ENCODE measurements at regions of chr3 and their contacts with region 1.

Region 1: GRCh38 chr3:114152519-114153151 is 26.2 kb downstream of the DRD3 start:
- DNase-seq: peak; percentile 78 to 91 (median 82)
- ATAC-seq: peak; percentile 83 to 94 (median 92)
- H3K4me3 ChIP-seq: peak overlapping the region in 11 of 12 donors; percentile 9 to 61 (median 52)
- H3K27ac ChIP-seq: peak overlapping the region in 1 of 12 donors; percentile 11
- H3K4me1 ChIP-seq: peaks cover 0 to 11% (median 4%) of the 10 kb centered on the region in 12 donors
- H3K27me3 ChIP-seq: no peaks in the 10 kb centered on the region
- CTCF ChIP-seq: peak; percentile 81 to 99 (median 92)
- POLR2A ChIP-seq: no peak

Region 2: GRCh38 chr3:113745273-113746068 is 407.2 kb before region 1 on chr3:
- intact Hi-C with region 1: loop called in 1 of 10 experiments (anchors 10 kb)
- DNase-seq: peak; percentile 57 to 77 (median 71)
- ATAC-seq: peak; percentile 52 to 73 (median 70)
- H3K4me3 ChIP-seq: peak overlapping the region; percentile 63 to 95 (median 85)
- H3K27ac ChIP-seq: peak overlapping the region; percentile 94 to 100 (median 98)
- H3K4me1 ChIP-seq: peaks cover 6 to 71% (median 36%) of the 10 kb centered on the region in 12 donors
- H3K27me3 ChIP-seq: no peaks in the 10 kb centered on the region
- CTCF ChIP-seq: peak; percentile 23 to 68 (median 59)
- POLR2A ChIP-seq: no peak

Region 3: DNA sequence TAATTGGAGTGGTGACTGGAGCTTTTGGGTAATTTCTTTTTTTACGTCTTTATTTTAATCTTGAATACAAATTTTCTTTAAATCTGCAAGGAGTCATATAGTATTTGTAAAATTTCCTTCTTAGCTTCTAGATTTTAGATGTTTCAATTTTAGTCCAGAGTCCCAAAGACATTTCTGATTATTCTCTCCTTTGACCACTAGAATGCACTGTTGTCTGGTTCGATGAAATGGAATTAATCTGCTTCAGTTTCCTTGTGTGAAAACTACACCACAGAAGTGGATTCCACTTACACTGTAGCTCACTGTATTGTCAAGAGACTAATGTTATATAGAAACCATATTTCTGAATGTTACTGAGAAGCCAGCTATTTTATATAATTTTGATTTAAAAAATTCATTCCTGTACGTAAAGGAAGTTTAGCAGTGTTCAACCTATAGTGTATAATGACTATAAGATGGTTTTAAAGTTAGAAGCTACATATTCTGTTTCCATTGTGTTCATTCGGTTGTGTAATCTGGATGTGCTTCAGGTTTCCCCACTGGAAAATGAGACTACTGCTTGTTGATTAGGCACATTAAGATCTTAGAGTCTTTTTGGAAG is 307.9 kb before region 1 on chr3:
- intact Hi-C with region 1: loop called in 3 of 10 experiments (anchors 5 to 10 kb)
- DNase-seq: no peak
- ATAC-seq: no peak
- H3K4me3 ChIP-seq: no peak overlapping the region
- H3K27ac ChIP-seq: no peak overlapping the region
- H3K4me1 ChIP-seq: no peaks in the 10 kb centered on the region
- H3K27me3 ChIP-seq: no peaks in the 10 kb centered on the region
- CTCF ChIP-seq: peak; percentile 32 to 70 (median 48)
- POLR2A ChIP-seq: no peak

Region 4: DNA sequence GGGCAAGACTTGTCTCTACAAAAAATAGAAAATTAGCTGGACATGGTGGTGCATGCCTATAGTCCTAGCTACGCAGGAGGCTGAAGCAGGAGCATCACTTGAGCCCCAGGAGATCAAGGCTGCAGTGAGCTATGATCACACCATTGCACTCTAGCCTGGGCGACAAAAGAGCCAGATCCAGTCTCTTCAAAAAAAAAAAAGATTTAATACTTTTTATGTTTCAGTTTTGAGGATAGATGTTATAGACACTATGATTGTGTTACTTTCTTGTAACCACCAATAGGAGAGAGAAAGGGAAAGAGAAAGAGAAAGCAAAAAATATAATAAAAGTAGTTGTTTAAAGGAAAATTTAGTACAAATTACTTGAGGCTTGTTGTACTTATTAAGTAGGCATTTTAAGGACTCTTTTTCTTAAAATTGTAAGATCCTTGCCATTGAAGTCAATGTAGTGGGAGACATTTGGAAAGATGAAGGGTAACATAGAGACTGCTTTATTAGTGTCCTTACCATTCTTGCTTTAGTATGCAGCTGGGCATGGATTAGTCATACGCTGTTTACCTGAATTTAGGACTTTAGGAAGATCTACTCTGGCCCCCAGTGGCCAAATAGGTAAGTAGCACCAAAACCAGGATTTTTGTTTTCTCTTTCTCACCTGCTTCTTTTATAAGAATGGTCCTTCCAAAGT is 239.9 kb before region 1 on chr3:
- intact Hi-C with region 1: no loop called
- DNase-seq: no peak
- ATAC-seq: peak in 1 of 4 donors; percentile 57
- H3K4me3 ChIP-seq: no peak overlapping the region
- H3K27ac ChIP-seq: no peak overlapping the region
- H3K4me1 ChIP-seq: peaks cover 0 to 9% (median 0%) of the 10 kb centered on the region in 12 donors
- H3K27me3 ChIP-seq: no peaks in the 10 kb centered on the region
- CTCF ChIP-seq: peak in 10 of 12 donors; percentile 12 to 52 (median 42)
- POLR2A ChIP-seq: no peak

Region 5: DNA sequence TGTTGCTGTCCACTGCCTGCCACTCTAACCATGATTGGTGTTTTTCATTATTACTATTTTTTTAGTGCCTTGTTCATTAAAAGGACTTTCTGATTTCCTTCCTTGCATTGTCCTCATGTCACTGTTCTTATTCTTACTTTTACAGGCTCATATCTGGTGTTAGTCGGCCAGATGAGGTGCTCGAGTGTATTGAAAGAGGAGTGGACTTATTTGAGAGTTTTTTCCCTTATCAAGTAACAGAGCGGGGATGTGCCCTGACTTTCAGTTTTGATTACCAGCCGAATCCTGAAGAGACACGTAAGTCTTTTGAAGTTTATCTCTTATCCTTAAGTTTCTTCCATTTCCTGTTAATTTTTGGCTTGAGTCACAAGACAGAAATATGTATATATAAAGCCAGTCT is 72.9 kb before region 1 on chr3:
- intact Hi-C with region 1: loop called in 2 of 10 experiments (anchors 2 to 10 kb)
- DNase-seq: no peak
- ATAC-seq: peak in 1 of 4 donors; percentile 37
- H3K4me3 ChIP-seq: peak overlapping the region in 6 of 12 donors; percentile 0 to 38 (median 16)
- H3K27ac ChIP-seq: peak overlapping the region in 8 of 12 donors; percentile 1 to 58 (median 20)
- H3K4me1 ChIP-seq: peaks cover 0 to 7% (median 0%) of the 10 kb centered on the region in 12 donors
- H3K27me3 ChIP-seq: no peaks in the 10 kb centered on the region
- CTCF ChIP-seq: no peak
- POLR2A ChIP-seq: no peak

Region 6: DNA sequence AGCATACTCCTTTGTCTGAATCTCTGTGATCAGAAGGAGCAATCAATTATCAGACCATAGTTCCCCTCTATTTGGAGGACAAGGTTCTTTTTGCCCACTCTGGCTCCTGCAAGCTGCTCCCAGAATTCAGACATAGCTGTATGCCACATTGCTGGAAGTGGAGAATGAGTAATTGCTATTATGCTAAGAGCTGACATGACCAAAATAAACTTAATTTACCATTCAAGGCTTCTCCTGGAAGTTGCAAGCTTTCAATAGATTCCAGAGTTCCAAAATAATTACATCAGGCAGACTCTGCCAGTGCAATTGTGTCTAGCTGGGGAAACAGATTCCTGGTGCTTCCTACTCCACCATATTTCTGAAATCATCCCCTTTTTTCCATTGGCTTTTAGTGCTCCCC is 33.9 kb after region 1 on chr3:
- intact Hi-C with region 1: no loop called
- DNase-seq: no peak
- ATAC-seq: no peak
- H3K4me3 ChIP-seq: no peak overlapping the region
- H3K27ac ChIP-seq: no peak overlapping the region
- H3K4me1 ChIP-seq: no peaks in the 10 kb centered on the region
- H3K27me3 ChIP-seq: no peaks in the 10 kb centered on the region
- CTCF ChIP-seq: no peak
- POLR2A ChIP-seq: no peak

Region 7: DNA sequence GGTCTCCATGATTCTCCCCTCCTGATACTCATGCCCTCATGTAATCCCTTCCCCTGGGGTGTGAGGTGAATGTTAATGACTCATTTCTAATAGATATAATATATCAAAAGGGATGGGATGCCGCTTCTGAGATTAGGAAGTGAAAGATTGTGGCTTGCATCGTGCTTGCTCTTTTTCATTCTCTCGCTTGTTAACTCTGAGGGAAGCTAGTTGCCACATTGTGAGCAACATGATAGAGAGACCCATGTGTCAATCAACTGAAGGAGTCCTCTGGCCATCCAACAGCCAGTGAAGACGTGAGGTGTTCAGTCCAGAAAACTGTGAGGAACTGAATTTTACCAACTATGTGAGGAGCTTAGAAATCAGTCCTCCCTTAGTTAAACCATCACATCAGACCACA is 55.1 kb after region 1 on chr3:
- intact Hi-C with region 1: no loop called
- DNase-seq: no peak
- ATAC-seq: no peak
- H3K4me3 ChIP-seq: no peak overlapping the region
- H3K27ac ChIP-seq: no peak overlapping the region
- H3K4me1 ChIP-seq: peaks cover 0 to 3% (median 0%) of the 10 kb centered on the region in 12 donors
- H3K27me3 ChIP-seq: peaks cover 0 to 5% (median 0%) of the 10 kb centered on the region in 9 donors
- CTCF ChIP-seq: no peak
- POLR2A ChIP-seq: no peak

Region 8: DNA sequence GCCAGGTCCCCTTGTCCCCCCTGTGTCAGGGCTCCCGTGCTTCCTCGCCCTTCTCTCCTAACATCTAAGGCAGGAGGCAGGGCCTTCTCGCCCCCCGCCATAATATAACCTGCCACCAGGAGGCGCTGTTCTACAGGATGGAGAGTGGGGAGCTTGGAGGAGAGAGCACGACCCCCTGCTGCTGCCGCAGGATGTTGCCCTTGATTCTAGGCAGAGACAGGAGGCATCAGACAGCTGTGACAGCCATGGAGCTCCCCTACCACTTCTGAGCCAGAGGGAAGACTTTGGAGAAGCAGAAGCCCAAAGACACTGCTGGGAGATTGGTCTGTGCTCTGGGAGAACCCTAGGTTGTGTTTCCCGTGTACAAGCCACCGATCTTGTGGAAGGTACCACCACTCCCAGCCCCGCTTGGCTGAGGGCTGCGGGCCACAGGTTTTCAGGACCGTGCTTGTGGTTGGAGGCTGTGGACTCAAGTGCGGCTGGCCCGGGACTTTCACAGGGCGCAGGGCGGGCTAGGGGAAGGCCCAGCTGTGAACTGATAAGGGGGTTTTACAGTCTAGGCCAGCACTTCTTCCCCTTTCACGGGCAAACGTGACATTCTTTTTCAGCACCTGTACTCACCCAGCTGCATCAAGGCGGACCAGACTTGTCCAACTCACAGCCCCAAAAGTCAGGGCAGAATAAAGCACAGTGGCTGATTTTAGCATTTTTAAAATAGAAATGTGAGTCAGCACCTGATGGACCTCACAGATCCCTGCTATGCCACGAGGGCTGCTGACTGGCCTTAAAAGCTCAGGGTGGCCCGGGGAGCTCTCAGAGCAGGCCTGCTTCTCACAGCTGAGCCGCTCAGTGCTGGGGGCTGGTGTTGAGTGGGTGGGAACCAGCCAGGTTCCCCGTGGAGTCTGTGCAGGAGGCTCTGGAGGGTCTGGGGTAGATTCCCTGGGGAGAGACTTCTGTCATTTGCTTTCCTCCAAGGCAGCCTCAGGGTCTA is 138.6 kb after region 1 on chr3:
- intact Hi-C with region 1: loop called in 3 of 10 experiments (anchors 5 to 10 kb)
- DNase-seq: peak; percentile 41 to 85 (median 42)
- ATAC-seq: peak in 3 of 4 donors; percentile 42 to 60 (median 59)
- H3K4me3 ChIP-seq: peak overlapping the region in 1 of 12 donors; percentile 19
- H3K27ac ChIP-seq: peak overlapping the region in 1 of 12 donors; percentile 68
- H3K4me1 ChIP-seq: peaks cover 0 to 6% (median 0%) of the 10 kb centered on the region in 12 donors
- H3K27me3 ChIP-seq: no peaks in the 10 kb centered on the region
- CTCF ChIP-seq: peak; percentile 52 to 83 (median 66)
- POLR2A ChIP-seq: no peak

Region 9: DNA sequence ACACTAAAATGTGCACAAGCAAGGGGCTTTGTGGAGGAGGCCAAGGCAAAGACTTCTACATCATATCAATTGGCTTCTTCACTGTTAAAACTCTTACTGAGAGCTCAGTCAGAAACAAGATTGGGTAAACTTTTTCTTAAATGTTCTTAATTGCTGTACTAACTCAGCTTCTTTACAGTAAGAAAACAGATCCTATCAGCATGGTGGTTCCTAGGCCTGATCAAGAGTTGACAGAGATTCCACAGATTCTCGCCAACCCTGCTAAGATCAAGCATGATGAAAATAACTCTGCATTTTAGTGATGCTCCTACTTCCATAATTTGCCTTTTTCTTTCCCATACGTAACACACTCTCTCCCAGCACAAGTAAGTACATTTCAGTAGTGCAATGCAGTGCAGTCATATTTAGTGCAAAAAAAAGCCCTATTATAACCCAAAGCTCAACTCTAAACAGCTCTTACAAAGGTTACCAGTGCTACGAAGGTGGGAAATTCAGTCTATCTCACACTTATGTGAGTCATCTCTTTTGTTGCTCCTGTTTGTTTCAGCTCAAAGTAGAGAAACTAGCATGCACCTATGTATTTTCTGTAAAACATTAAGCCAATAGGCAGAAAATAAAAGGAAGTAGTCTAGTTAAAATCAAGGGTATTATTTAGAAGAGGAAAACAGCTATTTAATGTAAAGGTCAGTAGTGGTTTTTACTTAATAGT is 171.1 kb after region 1 on chr3:
- intact Hi-C with region 1: loop called in 2 of 10 experiments (anchors 10 kb)
- DNase-seq: no peak
- ATAC-seq: no peak
- H3K4me3 ChIP-seq: no peak overlapping the region
- H3K27ac ChIP-seq: peak overlapping the region in 1 of 12 donors; percentile 10
- H3K4me1 ChIP-seq: peaks cover 0 to 15% (median 0%) of the 10 kb centered on the region in 12 donors
- H3K27me3 ChIP-seq: no peaks in the 10 kb centered on the region
- CTCF ChIP-seq: no peak
- POLR2A ChIP-seq: no peak

Region 10: GRCh38 chr3:115819785-115820384 is 1667.2 kb after region 1 on chr3:
- intact Hi-C with region 1: loop called in 2 of 10 experiments (anchors 10 kb)
- DNase-seq: peak in 4 of 5 donors; percentile 51 to 71 (median 60)
- ATAC-seq: peak in 3 of 4 donors; percentile 77 to 90 (median 81)
- H3K4me3 ChIP-seq: no peak overlapping the region
- H3K27ac ChIP-seq: no peak overlapping the region
- H3K4me1 ChIP-seq: no peaks in the 10 kb centered on the region
- H3K27me3 ChIP-seq: no peaks in the 10 kb centered on the region
- CTCF ChIP-seq: peak; percentile 86 to 100 (median 92)
- POLR2A ChIP-seq: no peak